HEK293 (cell line): ENCODE measurements at regions of chr18 and their contacts with region 1.

Region 1: DNA sequence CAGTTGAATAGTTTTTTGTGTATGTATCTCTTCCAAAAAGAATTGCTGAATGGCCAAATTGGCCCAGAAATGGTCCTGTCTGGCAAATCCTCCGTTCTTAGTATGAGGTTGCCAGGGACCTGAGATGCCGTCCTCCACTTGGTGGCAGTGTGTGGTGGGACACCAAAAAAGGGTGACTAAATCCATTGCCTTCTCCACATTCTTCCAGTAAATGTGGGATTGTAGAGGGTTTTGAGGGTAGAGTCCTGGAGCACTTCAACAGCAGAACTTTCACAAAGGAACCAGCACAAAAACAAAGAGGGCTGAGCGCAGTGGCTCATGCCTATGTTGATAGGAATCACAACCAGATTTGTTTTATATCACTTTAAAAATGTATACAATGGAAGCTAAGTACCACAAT is 199.9 kb downstream of the BCL2 start:
- H3K4me3 ChIP-seq: no peak overlapping the region
- H3K27ac ChIP-seq: no peak overlapping the region
- H3K4me1 ChIP-seq: 0 out of 2 replicates have a peak, but pooled peaks cover 3% of the 10 kb centered on the region
- CTCF ChIP-seq: peak; percentile 62

Region 2: GRCh38 chr18:63131106-63131958 is 11.7 kb after region 1 on chr18:
- CTCF ChIA-PET with region 1: interaction called, 22 read pairs
- POLR2A ChIA-PET with region 1: no interaction called
- H3K4me3 ChIP-seq: no peak overlapping the region
- H3K27ac ChIP-seq: no peak overlapping the region
- H3K4me1 ChIP-seq: no peaks in the 10 kb centered on the region
- CTCF ChIP-seq: peak; percentile 25; the same call in 1 of the 2 replicates